PC-3 (cell line): ENCODE measurements at regions of chr5 and their contacts with region 1.

Region 1: DNA sequence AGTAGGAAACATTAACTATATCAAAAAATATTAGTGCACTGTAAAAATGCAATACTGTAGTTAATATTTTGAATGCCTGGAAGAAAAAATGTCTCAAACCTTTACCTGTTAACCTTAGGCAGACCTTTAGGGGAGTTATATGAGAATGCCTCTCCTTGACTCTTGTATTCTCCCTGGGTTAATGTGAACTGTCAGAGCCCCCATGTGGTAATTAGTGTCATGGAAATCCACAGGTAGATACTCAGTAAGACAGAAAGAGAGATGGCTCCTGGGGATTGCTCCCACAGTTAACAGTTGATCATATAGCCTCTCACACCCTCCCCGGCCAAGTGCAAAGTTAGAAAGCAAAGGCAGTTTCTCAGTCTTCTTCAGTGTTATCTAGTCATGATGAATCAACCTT is 742.8 kb downstream of the NR2F1-AS1 start:
- DNase-seq: peak; percentile 52
- ATAC-seq: peak; percentile 17; the same call in 1 of the 2 replicates
- H3K4me3 ChIP-seq: no peak overlapping the region
- H3K27ac ChIP-seq: peak overlapping the region; percentile 83
- H3K4me1 ChIP-seq: peaks cover 29% of the 10 kb centered on the region
- H3K27me3 ChIP-seq: no peaks in the 10 kb centered on the region
- CTCF ChIP-seq: peak; percentile 62

Region 2: DNA sequence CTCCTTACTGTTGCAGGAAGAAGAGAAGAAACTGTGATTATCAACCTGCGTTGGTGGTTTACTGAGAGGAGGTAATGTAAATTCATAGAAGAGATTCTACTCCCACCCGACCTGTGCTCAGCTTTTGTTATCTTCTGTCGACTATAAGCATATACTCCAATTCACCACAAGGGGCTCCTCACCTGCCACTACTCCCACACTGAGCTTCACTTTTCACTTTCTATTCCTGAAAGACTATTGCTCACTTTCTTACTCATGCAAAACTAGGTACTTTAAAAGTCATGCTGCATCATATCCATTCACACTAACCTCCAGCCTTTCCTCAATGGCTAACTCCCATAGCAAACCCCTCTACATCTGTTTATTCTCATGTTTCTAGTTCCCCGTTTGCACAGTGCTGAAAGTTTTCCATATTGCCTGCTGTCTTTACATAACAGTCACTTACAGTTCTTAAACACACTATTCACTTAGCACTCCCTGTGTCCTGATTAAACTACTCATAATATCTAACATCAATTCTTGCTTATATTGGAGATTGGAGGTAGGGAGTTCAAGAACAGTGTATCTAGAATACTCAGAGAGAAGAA is 319.8 kb before region 1 on chr5:
- CTCF ChIA-PET with region 1: no interaction called
- POLR2A ChIA-PET with region 1: no interaction called
- intact Hi-C with region 1: loop called (anchors 1 kb)
- DNase-seq: peak; percentile 58
- ATAC-seq: peak; percentile 85
- H3K4me3 ChIP-seq: no peak overlapping the region
- H3K27ac ChIP-seq: no peak overlapping the region
- H3K4me1 ChIP-seq: no peaks in the 10 kb centered on the region; the same call in 1 of the 2 replicates
- H3K27me3 ChIP-seq: no peaks in the 10 kb centered on the region
- CTCF ChIP-seq: peak; percentile 73

Region 3: DNA sequence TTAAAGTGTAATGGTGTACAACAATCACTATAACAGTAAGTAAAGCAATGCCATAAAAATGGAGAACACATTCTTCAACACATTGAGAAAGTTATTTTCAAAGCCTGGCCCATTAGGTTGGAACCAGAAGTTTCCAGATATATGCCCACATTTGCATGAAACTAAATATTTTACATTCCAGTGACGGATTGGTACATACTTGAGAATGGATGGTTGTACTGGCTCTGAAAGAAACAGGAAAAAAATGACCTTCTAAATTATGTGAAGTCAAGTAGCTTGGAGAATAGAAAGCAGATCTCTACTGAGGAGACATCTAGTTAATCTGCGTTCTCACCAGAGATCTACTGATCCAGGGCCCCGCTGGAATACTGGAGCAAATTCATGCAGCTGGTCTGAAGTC is 294.2 kb before region 1 on chr5:
- CTCF ChIA-PET with region 1: no interaction called
- POLR2A ChIA-PET with region 1: no interaction called
- intact Hi-C with region 1: no loop called
- DNase-seq: no peak
- ATAC-seq: no peak
- H3K4me3 ChIP-seq: no peak overlapping the region
- H3K27ac ChIP-seq: no peak overlapping the region
- H3K4me1 ChIP-seq: no peaks in the 10 kb centered on the region
- H3K27me3 ChIP-seq: no peaks in the 10 kb centered on the region
- CTCF ChIP-seq: no peak

Region 4: DNA sequence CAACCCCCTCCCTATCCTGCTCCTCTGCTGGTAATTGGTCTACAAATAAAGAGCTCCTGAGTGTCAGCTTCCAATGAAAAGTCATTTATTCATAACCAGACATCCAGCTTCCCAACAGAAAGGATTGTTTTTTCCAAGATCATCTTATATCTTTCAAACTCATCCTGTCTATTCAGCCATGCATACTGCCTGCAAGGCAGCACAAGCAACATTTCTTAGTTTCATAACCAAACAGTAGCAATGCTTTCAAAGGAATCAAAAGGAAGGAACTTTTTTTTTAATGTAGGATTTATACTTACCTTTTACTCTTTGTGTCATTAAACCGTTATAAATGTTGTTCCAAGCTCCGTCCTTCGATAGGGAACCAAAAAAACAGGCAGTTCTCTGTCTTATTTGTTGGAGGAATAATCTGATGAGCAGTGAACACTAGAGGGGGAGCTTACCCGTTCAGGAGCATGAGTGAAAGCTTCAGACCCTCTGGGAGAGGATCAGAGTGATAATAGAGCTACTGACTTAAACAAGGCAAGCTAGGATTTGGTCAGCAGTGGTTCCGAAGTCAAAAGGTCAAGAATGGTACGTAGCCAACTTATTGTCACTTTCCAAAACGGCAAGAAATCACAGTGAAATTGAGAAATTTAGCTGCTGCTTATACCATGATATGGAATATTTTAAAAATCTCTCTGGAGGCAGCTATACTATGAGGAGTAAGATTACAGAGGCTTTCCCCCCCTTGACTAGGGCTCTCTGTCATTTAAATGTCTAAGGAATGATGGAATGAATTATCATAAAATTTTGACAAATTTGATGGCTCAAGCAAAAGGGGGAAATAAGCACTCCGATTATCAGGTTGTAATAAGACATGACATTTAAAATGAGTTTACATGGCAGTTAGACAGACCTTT is 150.2 kb before region 1 on chr5:
- CTCF ChIA-PET with region 1: interaction called, 7 read pairs
- POLR2A ChIA-PET with region 1: no interaction called
- intact Hi-C with region 1: loop called (anchors 1 kb)
- DNase-seq: peak; percentile 43
- ATAC-seq: peak; percentile 74
- H3K4me3 ChIP-seq: no peak overlapping the region
- H3K27ac ChIP-seq: no peak overlapping the region
- H3K4me1 ChIP-seq: no peaks in the 10 kb centered on the region; the same call in 1 of the 2 replicates
- H3K27me3 ChIP-seq: no peaks in the 10 kb centered on the region
- CTCF ChIP-seq: peak; percentile 62

Region 5: DNA sequence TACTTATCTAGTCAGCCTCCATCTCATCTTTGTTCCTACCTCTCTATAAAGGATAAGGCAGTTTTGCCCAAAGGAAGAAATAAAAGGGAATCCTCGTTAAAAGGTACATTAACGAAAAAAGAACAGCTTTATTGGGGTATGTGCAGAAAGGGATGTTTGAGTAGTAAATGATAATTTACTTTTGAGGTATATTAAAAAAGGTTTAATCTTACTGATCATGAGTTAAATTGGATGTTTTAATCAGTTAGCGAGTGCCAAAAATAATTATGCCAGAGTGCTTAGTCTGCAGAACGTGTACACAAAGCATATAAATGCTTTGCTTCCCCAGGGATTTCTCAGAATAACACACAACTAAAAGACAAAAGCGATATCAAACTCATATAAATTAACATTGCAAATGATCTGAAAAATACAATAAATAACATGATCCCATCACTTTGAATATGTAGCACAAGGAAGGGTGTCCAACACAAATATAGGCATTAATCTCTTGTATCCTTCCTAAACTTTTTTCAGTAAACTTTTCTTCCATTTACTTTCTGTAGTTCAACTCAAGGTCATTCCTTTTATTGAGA is 122.2 kb before region 1 on chr5:
- CTCF ChIA-PET with region 1: no interaction called
- POLR2A ChIA-PET with region 1: no interaction called
- intact Hi-C with region 1: no loop called
- DNase-seq: no peak
- ATAC-seq: no peak
- H3K4me3 ChIP-seq: no peak overlapping the region
- H3K27ac ChIP-seq: no peak overlapping the region
- H3K4me1 ChIP-seq: no peaks in the 10 kb centered on the region
- H3K27me3 ChIP-seq: no peaks in the 10 kb centered on the region
- CTCF ChIP-seq: no peak

Region 6: GRCh38 chr5:92945630-92946097 is 107.4 kb after region 1 on chr5:
- CTCF ChIA-PET with region 1: no interaction called
- POLR2A ChIA-PET with region 1: no interaction called
- intact Hi-C with region 1: loop called (anchors 1 kb)
- DNase-seq: peak; percentile 62
- ATAC-seq: peak; percentile 53
- H3K4me3 ChIP-seq: peak overlapping the region; percentile 27
- H3K27ac ChIP-seq: peak overlapping the region; percentile 98
- H3K4me1 ChIP-seq: peaks cover 45% of the 10 kb centered on the region
- H3K27me3 ChIP-seq: no peaks in the 10 kb centered on the region
- CTCF ChIP-seq: no peak